ENCODE measurements at regions of chr12 and their contacts with region 1.

Region 1: GRCh38 chr12:93766796-93767523 is 89.8 kb downstream of the CRADD start:
- DNase-seq: peak; percentile 80
- H3K4me3 ChIP-seq: no peak overlapping the region
- H3K27ac ChIP-seq: peak overlapping the region; percentile 60 to 77 (median 68)
- H3K4me1 ChIP-seq: peaks cover 0 to 47% (median 19%) of the 10 kb centered on the region in 4 donors
- H3K27me3 ChIP-seq: no peaks in the 10 kb centered on the region
- CTCF ChIP-seq: peak; percentile 54 to 73 (median 60)
- EP300 ChIP-seq: no peak
- POLR2A ChIP-seq: no peak

Region 2: DNA sequence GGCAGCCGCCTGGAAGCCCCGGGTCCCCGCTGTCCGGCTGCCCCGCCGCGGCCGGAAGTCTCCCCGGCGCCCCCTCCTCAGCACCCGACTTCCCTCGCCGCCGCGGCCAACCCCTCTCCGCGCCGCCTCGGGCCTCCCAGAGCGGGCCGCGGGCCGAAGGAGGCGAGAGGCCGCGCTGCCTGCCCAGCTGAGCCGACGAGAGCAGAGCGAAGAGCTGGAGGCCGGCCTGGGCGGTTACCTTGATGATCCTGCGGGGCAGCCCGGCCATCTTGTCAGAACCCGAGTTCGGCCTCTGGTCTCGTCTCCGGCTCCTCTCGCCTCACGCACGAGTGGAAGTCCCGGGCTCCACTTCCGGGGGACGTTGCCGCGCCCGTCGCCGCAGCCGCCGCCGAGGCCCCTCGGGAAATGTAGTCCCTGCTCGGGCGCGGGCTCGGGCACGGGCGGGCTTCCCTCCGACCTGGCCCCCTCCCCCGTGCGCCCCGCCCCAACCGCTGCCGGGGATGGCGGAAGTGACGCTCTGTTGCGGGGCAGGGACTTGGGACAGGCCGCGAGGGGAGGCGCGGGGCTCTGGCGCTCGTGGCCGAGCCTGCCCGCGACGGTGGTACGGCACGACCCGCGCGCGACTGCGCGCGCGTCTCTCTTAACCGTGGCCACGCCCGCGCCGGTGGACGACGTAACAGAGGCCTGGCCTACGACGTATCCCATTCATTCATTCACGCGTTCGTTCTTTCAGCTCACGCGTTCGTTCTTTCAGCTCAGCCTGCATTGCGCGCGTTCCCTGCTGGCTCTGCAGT is 325.1 kb before region 1 on chr12 and contains the start of gene UBE2N:
- intact Hi-C with region 1: loop called (anchors 10 kb)
- DNase-seq: peak; percentile 97
- H3K4me3 ChIP-seq: peak within 1 kb of the TSS; percentile 90 to 100 (median 97)
- H3K27ac ChIP-seq: peak within 1 kb of the TSS; percentile 85 to 97 (median 96)
- H3K4me1 ChIP-seq: peaks cover 0 to 45% (median 35%) of the 10 kb centered on the region in 4 donors
- H3K27me3 ChIP-seq: no peaks in the 10 kb centered on the region
- CTCF ChIP-seq: no peak
- EP300 ChIP-seq: no peak
- POLR2A ChIP-seq: peak; percentile 15 to 26
- total RNA-seq, gene UBE2N: 23.0 to 28.0 (median 23.9) TPM

Region 3: GRCh38 chr12:93502802-93503623 is 263.9 kb before region 1 on chr12:
- intact Hi-C with region 1: loop called (anchors 10 kb)
- DNase-seq: no peak
- H3K4me3 ChIP-seq: no peak overlapping the region
- H3K27ac ChIP-seq: no peak overlapping the region
- H3K4me1 ChIP-seq: no peaks in the 10 kb centered on the region
- H3K27me3 ChIP-seq: no peaks in the 10 kb centered on the region
- CTCF ChIP-seq: peak; percentile 48 to 78 (median 74)
- EP300 ChIP-seq: no peak
- POLR2A ChIP-seq: no peak

Region 4: DNA sequence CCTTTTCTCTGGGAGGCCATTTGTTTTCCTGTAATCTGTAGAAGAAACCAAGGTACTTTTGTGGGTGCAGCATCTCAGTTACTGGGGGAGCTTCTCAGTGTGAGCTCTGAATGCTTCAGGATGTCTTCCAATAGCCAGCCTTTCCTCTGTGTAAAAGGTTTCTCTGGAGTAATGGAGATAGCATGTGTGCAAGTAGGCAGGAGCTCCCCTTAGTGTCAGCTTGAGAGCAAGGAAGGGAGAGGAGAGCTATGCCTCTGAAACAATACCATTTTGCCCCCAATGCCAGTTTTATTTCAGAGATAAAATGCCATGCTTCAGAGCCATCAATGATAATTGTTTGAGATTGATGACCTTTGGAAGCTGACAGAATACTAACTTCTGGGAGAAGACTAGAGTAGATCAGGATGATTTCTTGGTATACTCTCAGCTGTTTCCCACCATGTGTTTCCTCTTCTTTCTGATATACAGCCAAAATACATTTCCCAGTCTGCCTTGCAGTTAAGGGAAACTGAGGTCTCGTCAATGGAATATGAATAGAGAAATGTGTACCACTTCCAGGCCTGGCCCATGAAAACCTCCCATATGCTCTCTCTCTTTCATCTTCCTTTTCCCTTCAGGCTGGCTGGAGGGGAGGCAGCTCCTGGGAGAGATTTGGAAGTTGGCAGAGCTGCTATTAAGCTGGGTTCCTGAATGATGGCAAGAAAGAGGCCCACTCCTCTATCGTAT is 35.9 kb after region 1 on chr12:
- intact Hi-C with region 1: no loop called
- DNase-seq: no peak
- H3K4me3 ChIP-seq: no peak overlapping the region
- H3K27ac ChIP-seq: peak overlapping the region; percentile 78 to 91 (median 86)
- H3K4me1 ChIP-seq: peaks cover 0 to 54% (median 36%) of the 10 kb centered on the region in 4 donors
- H3K27me3 ChIP-seq: no peaks in the 10 kb centered on the region
- CTCF ChIP-seq: peak in 1 of 4 experiments; percentile 13
- EP300 ChIP-seq: no peak
- POLR2A ChIP-seq: no peak

Region 5: GRCh38 chr12:93979189-93979588 is 212.2 kb after region 1 on chr12:
- intact Hi-C with region 1: loop called (anchors 5 kb)
- DNase-seq: no peak
- H3K4me3 ChIP-seq: no peak overlapping the region
- H3K27ac ChIP-seq: no peak overlapping the region
- H3K4me1 ChIP-seq: peaks cover 0 to 7% (median 0%) of the 10 kb centered on the region in 4 donors
- H3K27me3 ChIP-seq: no peaks in the 10 kb centered on the region
- CTCF ChIP-seq: peak in 2 of 4 experiments; percentile 29 to 36
- EP300 ChIP-seq: no peak
- POLR2A ChIP-seq: no peak

Region 6: DNA sequence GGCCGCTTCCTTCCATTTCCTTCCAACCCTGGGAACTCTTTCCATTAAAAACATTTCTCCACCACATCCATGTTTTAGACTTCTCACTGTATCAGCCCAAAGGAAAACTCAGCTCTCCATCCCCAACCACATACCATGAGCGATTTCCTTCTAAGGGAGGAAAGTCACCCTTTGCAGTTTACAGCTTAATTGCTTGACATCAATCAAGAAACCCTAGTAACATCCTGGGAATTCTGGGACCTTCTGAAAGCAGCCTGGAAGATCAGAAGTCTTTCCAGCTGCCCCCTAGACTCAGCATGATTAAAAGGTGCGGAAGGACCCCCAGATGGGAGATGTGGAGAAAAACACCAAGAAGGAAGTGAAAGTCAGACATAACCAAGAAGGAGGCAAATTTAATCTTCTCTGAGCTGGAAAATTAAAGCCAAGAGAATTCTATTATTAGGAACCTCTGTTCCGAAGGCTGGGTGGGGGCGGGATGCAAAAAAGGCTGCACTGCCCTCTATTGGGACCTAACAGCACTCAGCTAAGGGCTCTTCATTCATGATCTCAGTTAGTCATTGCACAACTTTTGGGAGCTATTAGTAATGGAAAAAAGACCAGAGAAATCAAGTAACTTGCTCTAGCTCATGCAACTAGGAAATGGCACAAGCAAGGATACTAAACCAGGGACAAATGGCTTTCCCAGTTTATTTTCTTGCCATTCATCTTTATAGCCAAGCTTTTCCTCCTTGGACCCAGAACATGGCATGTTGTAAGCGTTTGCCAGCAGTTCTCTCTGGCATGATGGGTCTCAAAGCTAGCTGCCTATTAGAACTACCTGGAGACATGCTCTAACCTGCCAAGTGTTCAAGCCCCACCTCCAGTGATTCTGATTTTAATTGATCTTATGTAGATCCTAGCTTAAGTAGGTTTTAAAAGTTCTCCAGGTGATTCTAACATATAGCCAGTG is 308.3 kb after region 1 on chr12:
- intact Hi-C with region 1: loop called (anchors 10 kb)
- DNase-seq: peak; percentile 90
- H3K4me3 ChIP-seq: no peak overlapping the region
- H3K27ac ChIP-seq: peak overlapping the region; percentile 64 to 80 (median 70)
- H3K4me1 ChIP-seq: peaks cover 0 to 25% (median 17%) of the 10 kb centered on the region in 4 donors
- H3K27me3 ChIP-seq: no peaks in the 10 kb centered on the region
- CTCF ChIP-seq: peak; percentile 46 to 60 (median 52)
- EP300 ChIP-seq: peak in 1 of 4 donors; percentile 61
- POLR2A ChIP-seq: no peak

Region 7: GRCh38 chr12:94101738-94102660 is 335.0 kb after region 1 on chr12:
- intact Hi-C with region 1: loop called (anchors 5 kb)
- DNase-seq: peak; percentile 93
- H3K4me3 ChIP-seq: peak overlapping the region; percentile 37 to 70 (median 63)
- H3K27ac ChIP-seq: peak overlapping the region; percentile 44 to 80 (median 62)
- H3K4me1 ChIP-seq: peaks cover 0 to 16% (median 14%) of the 10 kb centered on the region in 4 donors
- H3K27me3 ChIP-seq: no peaks in the 10 kb centered on the region
- CTCF ChIP-seq: peak; percentile 60 to 79 (median 73)
- EP300 ChIP-seq: no peak
- POLR2A ChIP-seq: no peak

Measured in sigmoid colon (tissue), 7 donors.